ENCODE measurements at regions of chr13 and their contacts with region 1.

Region 1: DNA sequence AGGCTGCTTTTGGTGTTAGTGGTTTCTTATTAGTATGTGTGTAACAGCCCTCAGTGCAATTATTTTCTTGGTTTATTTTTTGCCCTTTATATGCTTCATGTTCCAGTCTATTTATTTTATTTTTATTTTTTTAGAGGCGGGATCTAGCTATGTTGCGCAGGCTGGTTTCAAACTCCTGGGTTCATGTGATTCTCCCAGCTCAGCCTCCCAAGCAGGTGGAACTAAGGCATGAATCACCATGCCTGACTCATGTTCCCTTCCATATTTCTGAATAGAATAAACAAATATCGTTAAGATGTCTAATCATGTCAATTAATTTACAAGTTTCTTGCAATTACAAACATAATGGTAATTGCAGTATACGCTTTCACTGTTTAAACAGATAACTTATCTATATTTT is 11.7 kb downstream of the SKA3 start:
- DNase-seq: no peak
- H3K4me3 Mint-ChIP-seq: no peak overlapping the region
- H3K27ac Mint-ChIP-seq: no peak overlapping the region
- H3K4me1 Mint-ChIP-seq: peaks cover 3% of the 10 kb centered on the region
- H3K27me3 Mint-ChIP-seq: no peaks in the 10 kb centered on the region

Region 2: DNA sequence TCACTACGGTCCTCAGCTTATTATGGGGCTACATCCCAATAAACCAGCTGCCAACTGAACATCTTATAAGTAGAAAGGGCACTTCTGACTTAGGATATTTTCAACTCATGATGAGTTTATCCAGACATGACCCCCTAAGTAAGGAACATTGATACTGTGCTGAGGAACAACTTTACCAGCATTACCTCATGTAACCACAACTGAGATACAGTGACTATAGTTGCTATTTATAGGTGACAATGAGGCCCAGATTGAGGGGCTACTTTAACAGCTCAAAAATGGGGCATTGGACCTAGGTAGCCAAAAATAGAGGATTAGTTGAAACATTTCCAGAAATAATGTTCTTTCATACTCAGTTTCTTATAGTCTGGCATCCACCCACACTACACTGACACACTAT is 15.1 kb before region 1 on chr13:
- intact Hi-C with region 1: loop called (anchors 1 kb)
- DNase-seq: no peak
- H3K4me3 Mint-ChIP-seq: no peak overlapping the region
- H3K27ac Mint-ChIP-seq: no peak overlapping the region
- H3K4me1 Mint-ChIP-seq: peaks cover 8% of the 10 kb centered on the region
- H3K27me3 Mint-ChIP-seq: no peaks in the 10 kb centered on the region